ENCODE measurements at regions of chr1 and their contacts with region 1.

Region 1: DNA sequence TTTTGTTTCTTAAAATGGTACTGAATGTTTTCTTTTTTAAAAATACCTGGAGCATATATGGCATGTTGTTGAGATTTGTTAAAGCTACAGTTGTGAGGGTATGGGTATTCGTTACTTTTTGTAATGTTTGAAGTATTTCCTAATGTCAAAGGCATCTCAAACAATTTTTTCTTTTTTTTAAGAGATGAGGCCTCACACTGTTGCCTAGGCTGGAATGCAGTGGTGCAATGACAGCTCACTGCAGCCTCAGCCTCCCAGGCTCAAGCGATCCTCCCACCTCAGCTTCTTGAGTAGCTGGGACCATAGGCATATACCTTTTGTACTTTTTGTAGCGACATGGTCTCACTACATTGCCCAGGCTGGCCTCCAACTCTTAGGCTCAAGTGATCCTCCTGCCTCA is 16.1 kb downstream of the CLCN6 start:
- DNase-seq: no peak
- H3K4me3 ChIP-seq: no peak overlapping the region
- H3K27me3 ChIP-seq: no peaks in the 10 kb centered on the region
- CTCF ChIP-seq: no peak

Region 2: GRCh38 chr1:11654137-11654938 is 167.8 kb before region 1 on chr1 and contains the starts of genes FBXO2 and FBXO44:
- CTCF ChIA-PET with region 1: no interaction called
- POLR2A ChIA-PET with region 1: no interaction called
- DNase-seq: no peak
- H3K4me3 ChIP-seq: peak within 1 kb of the TSS; percentile 84
- H3K27me3 ChIP-seq: 0 out of 2 replicates have a peak, but pooled peaks cover 4% of the 10 kb centered on the region
- CTCF ChIP-seq: no peak
- polyA plus RNA-seq, gene FBXO2: 1.5 and 2.2 TPM in 2 replicates
- polyA plus RNA-seq, gene FBXO44: 15.1 and 24.4 TPM in 2 replicates

Region 3: DNA sequence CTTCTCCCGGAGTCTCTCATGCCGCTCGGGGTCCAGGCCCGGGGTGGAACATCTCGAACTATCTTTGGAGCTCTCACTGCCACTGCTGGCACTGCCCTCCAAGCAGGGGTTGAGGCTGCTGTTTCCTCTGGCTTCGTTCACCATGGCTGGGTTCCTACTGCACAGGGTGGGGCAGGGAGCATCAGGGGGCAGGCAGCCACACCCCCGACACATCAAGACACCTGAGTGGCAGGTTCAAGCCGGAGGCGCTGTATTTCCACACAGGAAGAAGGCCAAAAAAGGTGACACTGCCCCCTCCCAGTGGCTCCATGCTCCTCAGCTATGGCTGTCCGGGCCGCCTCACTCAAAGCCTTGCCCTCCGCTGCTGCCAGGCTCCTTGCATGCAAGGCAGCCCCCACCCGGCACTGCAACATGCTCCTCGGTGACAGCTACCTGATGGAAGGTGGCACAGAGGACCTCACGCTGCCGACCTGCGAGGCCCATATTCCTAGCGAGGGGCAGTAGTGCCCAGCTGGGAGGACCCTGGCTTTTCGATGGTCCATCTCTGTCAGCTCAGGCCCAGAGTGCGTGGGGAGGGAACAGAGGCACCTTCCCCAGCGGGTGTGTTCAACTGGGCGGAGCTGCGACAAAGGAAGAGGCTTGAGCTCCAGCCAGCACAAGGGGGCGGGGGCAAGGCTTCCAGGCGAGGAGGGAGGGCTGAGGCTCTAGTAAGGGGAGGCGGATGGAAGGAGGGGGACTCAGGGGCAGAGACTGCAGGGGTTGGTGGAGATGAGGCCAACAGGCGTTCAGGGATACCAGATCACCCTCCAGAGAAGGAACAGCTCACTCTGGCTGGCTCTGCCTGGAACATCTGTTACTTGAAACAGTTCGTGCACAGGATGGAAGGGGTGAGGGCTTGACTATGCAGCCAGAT is 18.9 kb before region 1 on chr1:
- CTCF ChIA-PET with region 1: no interaction called
- POLR2A ChIA-PET with region 1: interaction called, 12 read pairs
- DNase-seq: peak; percentile 91
- H3K4me3 ChIP-seq: peak overlapping the region; percentile 49
- H3K27me3 ChIP-seq: no peaks in the 10 kb centered on the region
- CTCF ChIP-seq: no peak